Activated CD8-positive, alpha-beta memory T cell treated with anti-CD3 and anti-CD28 coated beads, Interleukin-2, amount 10 ng/mL, durations not matched to agents 7 days and 5 days (primary cell): ENCODE measurements at regions of chr19 and their contacts with region 1.

Region 1: DNA sequence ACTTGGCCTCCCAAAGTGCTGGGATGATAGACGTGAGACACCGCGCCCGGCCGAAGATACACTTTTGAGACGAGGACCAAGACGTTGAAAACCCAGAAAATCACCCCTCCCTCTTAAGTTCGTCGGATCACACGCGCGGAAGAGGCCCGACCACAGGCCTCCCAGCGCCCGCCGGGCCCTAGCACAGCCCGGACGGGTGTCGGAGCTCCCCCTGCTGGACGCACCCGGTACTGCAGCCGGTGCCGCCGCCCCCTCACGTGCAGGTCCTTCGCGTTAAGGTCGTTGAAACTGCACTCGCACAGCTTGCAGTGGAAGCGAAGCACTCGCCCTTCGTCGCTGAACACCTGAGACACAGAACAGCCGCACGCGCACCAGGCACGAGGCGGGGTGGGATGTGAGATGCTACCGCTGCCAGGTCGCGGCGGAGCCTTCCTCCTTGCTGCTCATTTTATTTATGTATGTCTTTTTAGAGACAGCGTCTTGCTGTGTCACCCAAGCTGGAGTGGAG is 35.7 kb upstream of the MATK start:
- DNase-seq: peak; percentile 92
- ATAC-seq: peak; percentile 95
- H3K4me3 Mint-ChIP-seq: peak overlapping the region; percentile 30
- H3K27ac Mint-ChIP-seq: no peak overlapping the region
- H3K4me1 Mint-ChIP-seq: peaks cover 17% of the 10 kb centered on the region
- H3K27me3 Mint-ChIP-seq: no peaks in the 10 kb centered on the region

Region 2: GRCh38 chr19:3762501-3763459 is 59.1 kb before region 1 on chr19 and contains the start of gene MRPL54:
- CTCF ChIA-PET with region 1: interaction called, 68 read pairs
- DNase-seq: peak; percentile 100
- ATAC-seq: peak; percentile 86
- H3K4me3 Mint-ChIP-seq: peak within 1 kb of the TSS; percentile 95
- H3K27ac Mint-ChIP-seq: peak within 1 kb of the TSS; percentile 100
- H3K4me1 Mint-ChIP-seq: peaks cover 41% of the 10 kb centered on the region
- H3K27me3 Mint-ChIP-seq: peaks cover 3% of the 10 kb centered on the region
- total RNA-seq, gene MRPL54: 74.0 to 89.8 TPM

Region 3: GRCh38 chr19:3783660-3784584 is 38.0 kb before region 1 on chr19:
- CTCF ChIA-PET with region 1: interaction called, 27 read pairs
- DNase-seq: peak; percentile 58
- ATAC-seq: no peak
- H3K4me3 Mint-ChIP-seq: peak overlapping the region; percentile 81
- H3K27ac Mint-ChIP-seq: peak overlapping the region; percentile 9
- H3K4me1 Mint-ChIP-seq: peaks cover 30% of the 10 kb centered on the region
- H3K27me3 Mint-ChIP-seq: no peaks in the 10 kb centered on the region

Region 4: GRCh38 chr19:3798137-3798536 is 23.8 kb before region 1 on chr19:
- CTCF ChIA-PET with region 1: interaction called, 20 read pairs
- DNase-seq: peak; percentile 79
- ATAC-seq: peak; percentile 78
- H3K4me3 Mint-ChIP-seq: peak overlapping the region; percentile 36
- H3K27ac Mint-ChIP-seq: peak overlapping the region; percentile 82
- H3K4me1 Mint-ChIP-seq: peaks cover 28% of the 10 kb centered on the region
- H3K27me3 Mint-ChIP-seq: peaks cover 12% of the 10 kb centered on the region

Region 5: DNA sequence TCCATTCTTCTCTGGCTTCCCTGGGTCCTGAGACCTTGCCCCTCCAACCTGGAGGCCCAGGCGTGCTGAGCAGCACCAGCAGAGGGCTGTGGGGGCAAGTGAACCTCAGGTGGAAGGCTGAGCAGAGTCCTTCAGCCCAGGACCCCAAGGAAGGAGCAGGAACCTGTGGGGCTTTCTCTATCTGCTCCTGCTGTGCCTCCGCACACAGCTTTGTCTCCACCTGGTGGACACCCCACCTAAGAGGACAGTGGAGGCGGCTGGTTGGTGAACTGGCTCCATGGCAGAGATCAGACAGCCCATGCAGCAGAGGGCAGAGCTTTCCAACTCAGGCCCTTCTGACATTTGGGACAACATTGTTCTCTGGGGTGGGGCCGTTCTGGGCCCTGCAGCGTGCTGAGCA is 27.2 kb after region 1 on chr19:
- CTCF ChIA-PET with region 1: interaction called, 12 read pairs
- DNase-seq: peak; percentile 67
- ATAC-seq: peak; percentile 76
- H3K4me3 Mint-ChIP-seq: no peak overlapping the region
- H3K27ac Mint-ChIP-seq: no peak overlapping the region
- H3K4me1 Mint-ChIP-seq: no peaks in the 10 kb centered on the region
- H3K27me3 Mint-ChIP-seq: no peaks in the 10 kb centered on the region